ENCODE measurements at regions of chr20 and their contacts with region 1.

Region 1: DNA sequence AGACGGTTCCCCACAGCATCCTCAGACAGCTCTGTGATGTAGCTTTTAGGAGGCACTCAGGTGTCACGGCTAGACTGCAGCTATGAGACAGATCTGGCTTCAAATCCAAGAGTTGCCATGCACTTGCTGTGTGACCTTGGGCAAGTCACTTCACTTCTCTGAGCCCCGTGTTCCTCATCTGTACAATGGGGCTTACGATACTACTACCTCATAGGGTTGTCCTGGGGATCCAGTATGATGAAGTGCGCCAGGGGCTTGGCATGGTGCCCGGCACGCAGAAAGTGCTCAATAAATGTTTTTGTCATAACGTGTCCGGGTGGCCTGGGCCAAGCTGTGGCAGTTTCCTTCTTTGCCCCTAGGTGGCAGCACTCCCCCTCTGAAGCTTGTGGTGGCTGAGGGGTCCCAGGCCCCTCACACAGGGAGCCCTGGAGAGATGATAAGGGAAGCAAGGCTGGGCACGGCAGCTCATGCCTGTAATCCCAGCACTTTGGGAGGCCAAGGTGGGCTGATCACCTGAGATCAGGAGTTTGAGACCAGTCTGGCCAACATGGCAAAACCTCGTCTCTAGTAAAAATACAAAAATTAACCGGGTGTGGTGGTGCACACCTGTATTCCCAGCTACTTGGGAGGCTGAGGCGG is 19.1 kb upstream of the CHMP4B start:
- DNase-seq: peak; percentile 61
- ATAC-seq: peak; percentile 63
- H3K4me3 ChIP-seq: no peak overlapping the region
- H3K27ac ChIP-seq: no peak overlapping the region
- H3K4me1 ChIP-seq: peaks cover 43% of the 10 kb centered on the region
- H3K27me3 ChIP-seq: 0 out of 5 replicates have a peak, but pooled peaks cover 0 to 5% of the 10 kb centered on the region in 2 experiments
- CTCF ChIP-seq: peak; percentile 99
- EP300 ChIP-seq: no peak
- POLR2A ChIP-seq: no peak
- RAD21 ChIP-seq: peak; percentile 96

Region 2: GRCh38 chr20:33843854-33844253 is 51.8 kb after region 1 on chr20:
- CTCF ChIA-PET with region 1: no interaction called
- POLR2A ChIA-PET with region 1: no interaction called
- in situ Hi-C with region 1: no loop called
- intact Hi-C with region 1: loop called (anchors 5 kb)
- DNase-seq: no peak
- ATAC-seq: peak; percentile 48
- H3K4me3 ChIP-seq: no peak overlapping the region
- H3K27ac ChIP-seq: no peak overlapping the region
- H3K4me1 ChIP-seq: peaks cover 67% of the 10 kb centered on the region
- H3K27me3 ChIP-seq: no peaks in the 10 kb centered on the region
- CTCF ChIP-seq: no peak
- EP300 ChIP-seq: no peak
- POLR2A ChIP-seq: no peak
- RAD21 ChIP-seq: no peak

Region 3: GRCh38 chr20:33862709-33863403 is 70.8 kb after region 1 on chr20:
- CTCF ChIA-PET with region 1: interaction called, 5 read pairs
- POLR2A ChIA-PET with region 1: no interaction called
- in situ Hi-C with region 1: no loop called
- intact Hi-C with region 1: loop called (anchors 5 kb)
- DNase-seq: peak; percentile 76
- ATAC-seq: peak; percentile 74
- H3K4me3 ChIP-seq: peak overlapping the region in 2 of 3 experiments; percentile 13 to 59; a peak in 3 of 6 replicates
- H3K27ac ChIP-seq: no peak overlapping the region
- H3K4me1 ChIP-seq: peaks cover 42% of the 10 kb centered on the region
- H3K27me3 ChIP-seq: peaks cover 5 to 40% of the 10 kb centered on the region in 2 experiments
- CTCF ChIP-seq: peak; percentile 87
- EP300 ChIP-seq: no peak
- POLR2A ChIP-seq: no peak
- RAD21 ChIP-seq: peak; percentile 87

Region 4: DNA sequence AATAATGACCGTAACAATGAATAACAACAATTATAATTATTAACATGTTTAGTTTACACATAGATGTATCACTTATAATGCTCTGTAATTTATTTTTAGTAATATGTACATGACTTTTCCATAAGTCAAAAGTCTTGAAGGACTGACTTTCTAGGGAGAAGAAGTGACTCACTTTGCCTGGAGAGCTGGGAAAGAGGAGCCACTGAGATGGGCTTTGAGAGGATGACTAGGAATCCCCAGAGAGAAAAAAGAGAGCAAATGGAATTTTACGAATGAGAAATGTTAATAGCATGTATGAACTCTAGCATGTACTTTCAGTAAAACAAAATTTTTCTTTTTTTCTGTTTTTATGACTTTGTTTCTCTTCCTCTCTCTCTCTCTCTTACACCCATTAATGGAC is 133.8 kb after region 1 on chr20:
- CTCF ChIA-PET with region 1: no interaction called
- POLR2A ChIA-PET with region 1: no interaction called
- in situ Hi-C with region 1: no loop called
- intact Hi-C with region 1: no loop called
- DNase-seq: no peak
- ATAC-seq: no peak
- H3K4me3 ChIP-seq: no peak overlapping the region
- H3K27ac ChIP-seq: no peak overlapping the region
- H3K4me1 ChIP-seq: peaks cover 13% of the 10 kb centered on the region
- H3K27me3 ChIP-seq: peaks cover 3 to 22% of the 10 kb centered on the region in 2 experiments
- CTCF ChIP-seq: no peak
- EP300 ChIP-seq: no peak
- POLR2A ChIP-seq: no peak
- RAD21 ChIP-seq: no peak

Measured in HepG2 (cell line).